ENCODE measurements at regions of chr13 and their contacts with region 1.

Region 1: GRCh38 chr13:36981156-36981743 is 17.9 kb downstream of the ALG5 start:
- DNase-seq: no peak
- H3K4me3 ChIP-seq: no peak overlapping the region
- H3K27ac ChIP-seq: no peak overlapping the region
- H3K4me1 ChIP-seq: no peaks in the 10 kb centered on the region
- H3K27me3 ChIP-seq: no peaks in the 10 kb centered on the region
- CTCF ChIP-seq: peak; percentile 22 to 60 (median 49)

Region 2: DNA sequence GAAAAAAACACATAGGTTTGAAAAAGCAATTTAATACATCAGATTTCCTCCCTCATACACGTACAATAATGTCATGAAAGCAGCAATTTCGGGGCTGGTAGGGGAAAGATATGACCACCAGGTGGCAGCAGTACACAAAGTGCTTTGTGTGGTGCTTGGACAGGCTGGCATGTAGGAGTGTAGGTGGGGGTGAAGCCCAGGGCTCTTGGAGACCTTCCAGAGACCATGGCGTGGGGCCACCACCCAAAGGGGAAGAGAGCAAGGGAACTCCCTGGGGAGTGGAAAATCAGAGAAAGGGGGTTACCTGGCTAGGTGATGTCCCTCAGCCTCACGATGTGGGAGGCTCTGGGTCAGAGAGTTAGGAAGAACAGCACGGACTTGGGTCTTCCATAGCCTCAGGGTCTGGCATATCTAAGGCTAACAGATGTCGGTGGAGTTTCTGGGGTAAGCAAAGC is 560.8 kb before region 1 on chr13:
- intact Hi-C with region 1: loop called (anchors 5 kb)
- DNase-seq: peak in 1 of 2 donors; percentile 82
- H3K4me3 ChIP-seq: no peak overlapping the region
- H3K27ac ChIP-seq: no peak overlapping the region
- H3K4me1 ChIP-seq: no peaks in the 10 kb centered on the region
- H3K27me3 ChIP-seq: no peaks in the 10 kb centered on the region
- CTCF ChIP-seq: peak; percentile 25 to 82 (median 81)

Region 3: DNA sequence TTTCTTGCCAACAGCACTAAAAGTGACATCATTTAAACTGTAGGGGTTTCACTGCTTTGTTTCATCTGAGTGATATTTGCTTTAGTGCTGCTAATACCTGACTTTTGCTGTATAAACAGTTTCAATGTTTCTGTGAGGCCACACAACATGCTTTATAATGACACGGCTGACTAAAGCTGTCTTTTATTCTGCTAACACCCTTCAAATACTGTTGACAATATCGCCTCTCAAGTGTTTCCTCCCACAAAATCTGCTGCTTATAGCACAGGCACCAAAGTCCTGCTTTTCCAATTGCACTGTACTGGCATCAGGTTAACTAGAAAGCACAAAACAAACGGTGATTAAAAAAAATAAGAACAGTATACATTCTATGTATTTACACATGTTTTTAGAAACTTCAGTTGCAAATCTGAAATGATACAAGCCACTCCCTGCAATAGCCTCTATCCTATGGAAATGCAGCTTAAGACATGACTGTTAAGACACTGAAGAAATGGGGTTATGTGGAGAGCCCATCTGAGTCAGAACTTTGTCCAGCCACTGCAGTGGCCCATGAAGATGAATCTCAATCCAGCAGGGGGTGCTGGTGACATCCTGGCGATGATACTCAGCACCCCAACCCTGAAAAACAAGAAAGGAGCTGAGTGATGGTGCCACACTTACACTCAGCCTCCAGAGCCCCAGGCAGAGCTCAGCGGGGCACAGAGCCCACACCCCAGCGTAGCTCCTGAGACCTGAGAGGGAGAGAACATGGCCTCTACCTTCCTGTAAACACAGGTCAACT is 132.9 kb before region 1 on chr13:
- intact Hi-C with region 1: loop called (anchors 2 kb)
- DNase-seq: no peak
- H3K4me3 ChIP-seq: no peak overlapping the region
- H3K27ac ChIP-seq: peak overlapping the region; percentile 12 to 45
- H3K4me1 ChIP-seq: peaks cover 0 to 6% of the 10 kb centered on the region in 2 donors
- H3K27me3 ChIP-seq: no peaks in the 10 kb centered on the region
- CTCF ChIP-seq: no peak

Region 4: DNA sequence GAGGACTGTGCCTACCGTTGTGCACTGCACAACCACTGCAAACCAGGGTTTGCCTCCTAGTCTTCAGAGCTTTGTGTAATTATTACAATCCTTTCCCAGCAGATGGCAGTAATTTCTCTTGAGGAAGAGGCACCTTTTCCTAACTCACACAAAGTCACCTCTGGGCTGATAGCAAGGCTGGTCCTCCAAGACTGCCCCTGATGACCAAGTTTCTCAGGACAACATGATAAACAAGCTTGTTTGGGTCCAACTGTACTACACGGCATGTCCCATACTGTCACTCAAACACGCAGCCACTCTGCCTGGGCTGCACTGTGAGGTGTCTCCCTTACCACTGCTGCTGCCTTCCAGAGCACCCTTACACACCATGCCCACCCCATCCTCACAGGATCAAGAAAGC is 123.0 kb before region 1 on chr13:
- intact Hi-C with region 1: loop called (anchors 1 kb)
- DNase-seq: no peak
- H3K4me3 ChIP-seq: no peak overlapping the region
- H3K27ac ChIP-seq: no peak overlapping the region
- H3K4me1 ChIP-seq: peaks cover 0 to 2% of the 10 kb centered on the region in 2 donors
- H3K27me3 ChIP-seq: no peaks in the 10 kb centered on the region
- CTCF ChIP-seq: peak; percentile 12 to 62 (median 38)

Region 5: GRCh38 chr13:37163641-37164265 is 182.5 kb after region 1 on chr13:
- intact Hi-C with region 1: no loop called
- DNase-seq: no peak
- H3K4me3 ChIP-seq: no peak overlapping the region
- H3K27ac ChIP-seq: no peak overlapping the region
- H3K4me1 ChIP-seq: no peaks in the 10 kb centered on the region
- H3K27me3 ChIP-seq: no peaks in the 10 kb centered on the region
- CTCF ChIP-seq: no peak

Measured in ascending aorta (tissue), 2 donors.